Mammary epithelial cell (primary cell): ENCODE measurements at regions of chr18 and their contacts with region 1.

Region 1: DNA sequence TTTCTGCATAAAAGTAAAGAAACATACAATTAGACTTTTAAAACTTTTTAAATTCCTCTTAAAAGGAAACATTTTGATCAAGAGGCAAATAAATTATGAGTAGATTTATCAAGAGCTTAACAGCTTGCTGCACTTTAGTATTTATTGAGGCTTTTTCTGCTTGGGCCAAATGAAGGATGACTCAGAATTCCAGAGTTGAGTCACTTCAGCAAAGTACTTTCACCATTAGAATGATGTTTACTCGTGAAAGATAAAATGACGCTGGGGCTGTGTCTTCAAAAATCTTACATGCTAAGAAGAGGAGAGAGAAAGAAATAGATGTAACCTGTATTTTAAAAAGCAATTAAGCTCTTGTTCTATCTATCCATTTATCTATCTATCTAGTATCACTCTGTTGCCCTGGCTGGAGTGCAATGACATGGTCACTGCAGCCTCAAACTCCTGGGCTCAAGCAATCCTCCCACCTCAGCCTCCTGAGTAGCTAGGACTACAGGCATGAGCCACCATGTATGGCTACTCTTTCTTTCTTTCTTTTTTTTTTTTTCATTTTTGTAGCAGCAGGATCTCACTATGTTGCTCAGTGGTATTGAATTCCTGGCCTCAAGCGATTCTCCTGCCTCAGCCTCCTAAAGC is 75.3 kb upstream of the RIOK3 start:
- DNase-seq: peak; percentile 77
- H3K4me3 ChIP-seq: peak overlapping the region in 1 of 3 experiments; percentile 19
- H3K27ac ChIP-seq: peak overlapping the region; percentile 86
- H3K4me1 ChIP-seq: peaks cover 15% of the 10 kb centered on the region
- H3K27me3 ChIP-seq: no peaks in the 10 kb centered on the region
- CTCF ChIP-seq: no peak

Region 2: GRCh38 chr18:22813648-22814328 is 564.0 kb before region 1 on chr18:
- CTCF ChIA-PET with region 1: no interaction called
- dilution Hi-C with region 1: no loop called
- in situ Hi-C with region 1: no loop called
- intact Hi-C with region 1: loop called (anchors 5 kb)
- DNase-seq: peak; percentile 60
- H3K4me3 ChIP-seq: peak overlapping the region in 2 of 3 experiments; percentile 17 to 25
- H3K27ac ChIP-seq: peak overlapping the region; percentile 68
- H3K4me1 ChIP-seq: peaks cover 30% of the 10 kb centered on the region
- H3K27me3 ChIP-seq: no peaks in the 10 kb centered on the region
- CTCF ChIP-seq: peak; percentile 77 to 81

Region 3: GRCh38 chr18:23077493-23078256 is 300.1 kb before region 1 on chr18:
- CTCF ChIA-PET with region 1: interaction called, 16 read pairs
- dilution Hi-C with region 1: no loop called
- in situ Hi-C with region 1: no loop called
- intact Hi-C with region 1: no loop called
- DNase-seq: no peak
- H3K4me3 ChIP-seq: no peak overlapping the region
- H3K27ac ChIP-seq: no peak overlapping the region
- H3K4me1 ChIP-seq: no peaks in the 10 kb centered on the region
- H3K27me3 ChIP-seq: no peaks in the 10 kb centered on the region
- CTCF ChIP-seq: peak in 1 of 2 donors; percentile 27

Region 4: DNA sequence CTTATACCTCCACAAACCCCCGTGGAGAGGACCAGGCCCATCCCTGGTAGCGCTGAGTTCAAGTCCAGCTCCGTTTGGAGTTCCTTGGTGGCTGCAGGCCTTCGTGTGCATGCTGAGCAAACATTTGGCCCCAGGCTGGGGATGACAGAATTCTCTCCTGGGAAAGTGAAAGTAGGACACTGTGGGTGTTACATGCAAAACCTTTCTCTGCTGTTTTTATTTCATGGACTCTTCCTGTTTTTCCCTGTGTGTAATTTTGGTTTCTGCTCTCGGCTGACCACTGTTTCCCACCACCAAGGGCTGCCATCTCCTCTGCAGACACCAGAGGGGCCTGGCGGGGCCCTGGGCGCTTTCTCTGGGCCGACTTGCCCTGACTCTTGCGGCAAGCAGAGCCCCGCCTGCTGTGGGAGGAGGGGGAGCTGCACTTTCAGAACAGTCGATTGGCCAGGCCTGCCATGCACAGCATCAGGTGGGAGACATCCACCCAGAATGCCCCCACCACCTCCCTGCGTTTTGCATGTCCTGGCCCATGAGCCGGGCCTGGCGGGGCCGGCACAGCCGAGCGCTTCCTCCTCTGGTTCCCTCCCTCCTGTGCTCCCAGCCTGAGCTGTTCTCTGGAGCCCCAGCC is 140.1 kb before region 1 on chr18:
- CTCF ChIA-PET with region 1: interaction called, 4 read pairs
- dilution Hi-C with region 1: no loop called
- in situ Hi-C with region 1: no loop called
- intact Hi-C with region 1: loop called (anchors 1 kb)
- DNase-seq: peak; percentile 53
- H3K4me3 ChIP-seq: peak overlapping the region; percentile 1 to 45 (median 32)
- H3K27ac ChIP-seq: no peak overlapping the region
- H3K4me1 ChIP-seq: peaks cover 17% of the 10 kb centered on the region
- H3K27me3 ChIP-seq: no peaks in the 10 kb centered on the region
- CTCF ChIP-seq: peak; percentile 6 to 41

Region 5: GRCh38 chr18:23340656-23341055 is 37.1 kb before region 1 on chr18:
- CTCF ChIA-PET with region 1: no interaction called
- dilution Hi-C with region 1: loop called (anchors 5 kb)
- in situ Hi-C with region 1: no loop called
- intact Hi-C with region 1: no loop called
- DNase-seq: no peak
- H3K4me3 ChIP-seq: no peak overlapping the region
- H3K27ac ChIP-seq: no peak overlapping the region
- H3K4me1 ChIP-seq: no peaks in the 10 kb centered on the region
- H3K27me3 ChIP-seq: no peaks in the 10 kb centered on the region
- CTCF ChIP-seq: no peak